Left ventricle myocardium superior (tissue), 1 donor: ENCODE measurements at regions of chr15 and their contacts with region 1.

Region 1: GRCh38 chr15:97248376-97248775 is 712.1 kb upstream of the ARRDC4 start:
- DNase-seq: no peak
- ATAC-seq: no peak

Region 2: GRCh38 chr15:95799286-95800200 is 1448.8 kb before region 1 on chr15:
- intact Hi-C with region 1: loop called (anchors 10 kb)
- DNase-seq: no peak
- ATAC-seq: no peak

Region 3: GRCh38 chr15:96932620-96933019 is 315.8 kb before region 1 on chr15:
- intact Hi-C with region 1: no loop called
- DNase-seq: no peak
- ATAC-seq: no peak